ENCODE measurements at regions of chr4 and their contacts with region 1.

Region 1: DNA sequence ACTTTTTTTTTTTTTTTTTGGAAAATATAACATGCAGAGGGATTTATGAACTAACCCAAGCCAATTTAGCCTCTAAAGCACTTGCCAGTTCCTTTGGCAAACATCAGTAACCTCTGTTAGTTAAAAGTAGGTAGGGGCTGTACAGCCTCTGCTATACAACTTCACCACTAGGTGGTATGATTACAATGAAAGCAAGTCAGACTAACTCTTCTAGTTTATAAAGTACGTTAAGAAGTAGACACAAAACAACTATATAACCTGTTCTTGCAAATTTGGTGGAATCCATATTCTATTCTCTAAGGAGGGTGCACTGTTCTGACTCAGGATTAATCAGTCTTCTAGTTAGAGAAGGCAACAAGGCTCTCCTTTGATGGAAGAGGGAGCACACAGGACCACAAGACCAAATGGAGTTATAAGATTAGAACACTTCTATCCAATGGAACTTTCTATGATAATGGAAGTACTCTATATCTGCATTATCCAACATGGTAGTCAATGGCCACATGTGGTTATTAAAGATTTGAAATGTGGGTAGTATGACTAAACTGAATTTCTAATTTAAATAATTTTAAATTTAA is 12.8 kb downstream of the AIMP1 start:
- DNase-seq: peak; percentile 21
- H3K4me3 ChIP-seq: no peak overlapping the region
- H3K27ac ChIP-seq: no peak overlapping the region
- H3K4me1 ChIP-seq: peaks cover 5% of the 10 kb centered on the region
- CTCF ChIP-seq: peak; percentile 83

Region 2: DNA sequence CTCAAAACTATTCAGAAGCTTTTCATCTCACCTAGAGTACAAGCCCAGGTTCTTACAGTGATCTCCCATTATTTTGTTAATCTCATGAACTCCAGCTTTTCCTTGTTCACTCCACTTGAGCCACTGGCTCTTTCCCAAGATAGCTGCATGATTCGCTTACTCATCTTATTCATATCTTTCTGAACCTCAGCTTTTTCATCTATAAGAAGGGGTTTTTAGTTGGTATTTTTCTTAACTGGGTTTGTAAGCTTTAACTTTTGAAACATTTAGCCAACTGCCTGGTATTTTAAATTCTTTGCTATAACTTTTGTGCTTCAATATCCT is 15.5 kb after region 1 on chr4:
- CTCF ChIA-PET with region 1: no interaction called
- POLR2A ChIA-PET with region 1: interaction called, 10 read pairs
- intact Hi-C with region 1: no loop called
- DNase-seq: no peak
- H3K4me3 ChIP-seq: no peak overlapping the region
- H3K27ac ChIP-seq: no peak overlapping the region
- H3K4me1 ChIP-seq: no peaks in the 10 kb centered on the region
- CTCF ChIP-seq: no peak

Measured in OCI-LY7 (cell line).